Activated CD4-positive, alpha-beta memory T cell treated with anti-CD3 and anti-CD28 coated beads for 36 hours (primary cell): ENCODE measurements at regions of chr11 and their contacts with region 1.

Region 1: GRCh38 chr11:18634140-18635032 is at the start of gene SPTY2D1:
- DNase-seq: peak; percentile 99
- H3K4me3 Mint-ChIP-seq: peak within 1 kb of the TSS; percentile 89
- H3K27ac Mint-ChIP-seq: peak within 1 kb of the TSS; percentile 99
- H3K4me1 Mint-ChIP-seq: peaks cover 22% of the 10 kb centered on the region
- H3K27me3 Mint-ChIP-seq: no peaks in the 10 kb centered on the region
- total RNA-seq, gene SPTY2D1: 18.7 to 23.4 TPM

Region 2: DNA sequence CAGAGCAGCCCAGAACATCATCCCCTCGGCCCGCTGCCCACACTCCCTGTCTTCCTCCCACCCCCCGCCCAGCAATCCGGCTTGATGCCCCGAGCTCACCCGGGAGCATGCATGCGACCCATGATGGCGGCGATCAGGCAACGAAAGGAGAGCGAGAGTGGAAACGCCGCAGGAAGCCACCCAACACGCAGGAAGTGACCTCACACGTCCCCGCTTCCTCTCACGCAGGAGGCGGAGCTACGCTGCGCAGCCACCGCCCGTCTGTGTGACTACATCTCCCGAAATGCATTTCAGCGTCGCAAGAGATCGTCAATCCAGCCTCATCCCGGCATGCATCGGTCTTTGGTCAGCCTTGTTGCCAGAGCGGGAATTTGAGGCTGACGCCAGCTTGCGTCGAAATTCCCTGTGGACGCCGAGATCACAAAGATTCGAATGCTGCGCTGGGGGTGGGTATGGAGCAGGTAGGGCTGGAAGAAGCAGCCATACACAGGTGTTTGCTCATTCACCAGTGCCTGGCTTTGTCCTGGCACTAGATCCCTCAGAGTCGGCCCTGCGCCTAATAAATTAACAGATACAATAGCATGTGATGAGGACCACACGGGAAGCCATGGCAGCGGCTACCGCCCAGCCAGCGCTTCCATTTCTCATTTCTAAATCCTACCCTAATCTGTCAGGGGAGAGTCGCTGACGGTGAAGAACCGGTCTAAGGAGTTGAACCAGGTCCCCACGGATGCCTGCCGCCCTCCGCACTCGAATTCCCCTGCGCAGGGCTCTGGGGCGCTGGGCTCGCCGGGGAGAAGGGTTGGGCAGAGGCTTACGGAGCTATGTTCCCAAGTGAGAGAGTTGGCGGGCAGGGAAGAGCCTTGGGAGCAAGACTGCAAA is 1556.6 kb before region 1 on chr11 and contains the start of gene RPS13:
- CTCF ChIA-PET with region 1: no interaction called
- POLR2A ChIA-PET with region 1: no interaction called
- intact Hi-C with region 1: loop called (anchors 5 kb)
- DNase-seq: peak; percentile 97
- H3K4me3 Mint-ChIP-seq: peak within 1 kb of the TSS; percentile 96
- H3K27ac Mint-ChIP-seq: peak within 1 kb of the TSS; percentile 93
- H3K4me1 Mint-ChIP-seq: peaks cover 34% of the 10 kb centered on the region
- H3K27me3 Mint-ChIP-seq: no peaks in the 10 kb centered on the region
- total RNA-seq, gene RPS13: 1,729 to 1,745 TPM

Region 3: GRCh38 chr11:18321980-18322711 is 312.2 kb before region 1 on chr11 and contains the starts of genes GTF2H1 and HPS5:
- CTCF ChIA-PET with region 1: no interaction called
- POLR2A ChIA-PET with region 1: interaction called, 7 read pairs
- intact Hi-C with region 1: loop called (anchors 1 kb)
- DNase-seq: peak; percentile 97
- H3K4me3 Mint-ChIP-seq: peak within 1 kb of the TSS; percentile 97
- H3K27ac Mint-ChIP-seq: peak within 1 kb of the TSS; percentile 100
- H3K4me1 Mint-ChIP-seq: peaks cover 66% of the 10 kb centered on the region
- H3K27me3 Mint-ChIP-seq: no peaks in the 10 kb centered on the region
- total RNA-seq, gene GTF2H1: 37.3 to 39.5 TPM
- total RNA-seq, gene HPS5: 19.9 to 20.9 TPM

Region 4: GRCh38 chr11:18526521-18527296 is 107.7 kb before region 1 on chr11 and contains the start of gene TSG101:
- CTCF ChIA-PET with region 1: interaction called, 7 read pairs
- POLR2A ChIA-PET with region 1: interaction called, 28 read pairs
- intact Hi-C with region 1: loop called (anchors 1 kb)
- DNase-seq: peak; percentile 95
- H3K4me3 Mint-ChIP-seq: peak within 1 kb of the TSS; percentile 100
- H3K27ac Mint-ChIP-seq: peak within 1 kb of the TSS; percentile 100
- H3K4me1 Mint-ChIP-seq: peaks cover 47% of the 10 kb centered on the region
- H3K27me3 Mint-ChIP-seq: no peaks in the 10 kb centered on the region
- total RNA-seq, gene TSG101: 41.7 to 45.6 TPM

Region 5: DNA sequence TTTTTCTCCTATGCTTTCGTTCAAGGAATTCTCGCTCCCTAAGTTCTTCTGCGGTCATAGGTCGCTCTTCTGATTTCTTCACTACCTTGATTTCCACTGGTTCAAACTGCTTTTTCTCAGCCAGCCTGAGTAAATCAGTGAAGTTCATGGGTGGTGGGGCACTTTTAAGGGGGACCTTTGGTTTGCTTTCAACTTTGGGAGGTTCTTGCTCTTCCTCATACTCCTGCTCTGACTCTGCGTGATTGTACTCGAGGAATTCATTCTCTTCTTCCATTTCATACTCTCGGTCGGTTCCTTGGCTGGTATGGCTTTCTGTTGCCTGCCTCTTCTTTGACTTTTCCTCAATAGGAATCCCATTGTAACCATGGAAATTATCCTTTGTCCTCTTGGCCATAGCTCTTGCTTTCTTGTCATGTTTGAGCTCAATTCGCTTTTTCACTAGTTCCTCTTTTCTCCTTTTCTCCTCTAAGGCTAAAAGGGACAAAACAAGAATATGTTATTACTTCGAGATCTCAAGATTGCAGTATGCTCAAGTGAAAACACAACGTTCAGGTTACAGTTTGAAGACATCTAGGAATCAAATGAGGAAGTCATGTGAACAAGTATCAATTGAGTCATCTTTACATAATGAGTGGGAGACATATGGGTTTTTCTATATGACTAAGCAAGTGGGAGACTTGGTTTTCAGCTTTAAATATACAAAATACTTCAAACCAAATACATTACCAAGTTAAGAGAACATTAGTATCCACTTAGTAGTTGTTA is 18.6 kb before region 1 on chr11:
- CTCF ChIA-PET with region 1: interaction called, 24 read pairs
- POLR2A ChIA-PET with region 1: interaction called, 61 read pairs
- intact Hi-C with region 1: loop called (anchors 1 kb)
- DNase-seq: peak; percentile 14
- H3K4me3 Mint-ChIP-seq: peak overlapping the region; percentile 5
- H3K27ac Mint-ChIP-seq: peak overlapping the region; percentile 77
- H3K4me1 Mint-ChIP-seq: peaks cover 46% of the 10 kb centered on the region
- H3K27me3 Mint-ChIP-seq: no peaks in the 10 kb centered on the region

Region 6: GRCh38 chr11:18698341-18699268 is 64.2 kb after region 1 on chr11 and contains the start of gene TMEM86A:
- CTCF ChIA-PET with region 1: no interaction called
- POLR2A ChIA-PET with region 1: no interaction called
- intact Hi-C with region 1: loop called (anchors 1 kb)
- DNase-seq: peak; percentile 93
- H3K4me3 Mint-ChIP-seq: peak within 1 kb of the TSS; percentile 75
- H3K27ac Mint-ChIP-seq: peak within 1 kb of the TSS; percentile 18
- H3K4me1 Mint-ChIP-seq: peaks cover 14% of the 10 kb centered on the region
- H3K27me3 Mint-ChIP-seq: no peaks in the 10 kb centered on the region
- total RNA-seq, gene TMEM86A: 0.50 to 0.65 TPM

Region 7: DNA sequence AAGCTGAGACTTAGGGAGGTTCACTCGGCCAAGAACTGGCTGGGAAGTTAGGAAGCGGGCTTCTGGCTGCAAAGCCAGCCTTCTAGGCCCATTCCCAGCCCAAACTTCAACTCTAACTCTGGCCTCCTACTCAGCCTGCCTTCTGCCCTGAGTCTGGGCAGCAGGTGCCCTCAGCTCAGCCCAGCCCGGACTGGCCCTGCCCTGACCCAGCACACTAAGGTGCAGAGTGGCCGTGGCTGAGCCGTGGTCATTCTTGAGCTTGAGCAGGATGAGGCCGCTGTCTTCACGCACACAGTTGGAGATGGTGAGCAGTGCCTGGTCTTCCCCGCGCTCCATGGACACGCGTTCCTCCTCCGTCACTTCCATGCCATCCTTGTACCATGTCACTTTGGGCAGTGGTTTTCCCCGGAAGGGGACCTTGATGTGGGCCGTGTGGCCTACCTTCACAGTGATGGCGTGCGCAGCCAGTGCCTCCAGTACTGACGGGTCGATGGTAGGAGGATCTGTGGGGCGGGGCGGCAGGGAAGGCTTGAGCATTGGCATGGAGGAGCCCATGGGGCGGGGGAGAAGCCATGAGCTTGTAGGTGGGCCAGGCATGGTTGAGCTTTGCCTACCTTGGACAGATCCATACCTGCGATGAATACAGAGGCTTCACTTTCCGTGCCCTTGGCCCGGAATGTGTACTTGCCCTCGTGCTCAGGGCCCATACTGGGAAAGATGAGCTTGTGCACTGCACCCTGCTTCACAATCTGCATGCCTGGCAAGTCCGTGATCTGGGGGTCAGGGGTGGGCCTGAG is 79.5 kb after region 1 on chr11:
- CTCF ChIA-PET with region 1: no interaction called
- POLR2A ChIA-PET with region 1: no interaction called
- intact Hi-C with region 1: no loop called
- DNase-seq: no peak
- H3K4me3 Mint-ChIP-seq: no peak overlapping the region
- H3K27ac Mint-ChIP-seq: no peak overlapping the region
- H3K4me1 Mint-ChIP-seq: peaks cover 2% of the 10 kb centered on the region
- H3K27me3 Mint-ChIP-seq: no peaks in the 10 kb centered on the region